Ovary (tissue), 10 donors: ENCODE measurements at regions of chr11 and their contacts with region 1.

Region 1: GRCh38 chr11:62645956-62646824 is at the start of gene GANAB:
- DNase-seq: peak; percentile 98 to 99 (median 99)
- H3K4me3 ChIP-seq: peak within 1 kb of the TSS; percentile 85
- H3K27ac ChIP-seq: peak within 1 kb of the TSS; percentile 69 to 87
- H3K4me1 ChIP-seq: peaks cover 4% of the 10 kb centered on the region
- H3K27me3 ChIP-seq: no peaks in the 10 kb centered on the region
- CTCF ChIP-seq: no peak
- EP300 ChIP-seq: no peak
- POLR2A ChIP-seq: peak; percentile 81
- total RNA-seq, gene GANAB: 91.4 to 278 (median 228) TPM

Region 2: DNA sequence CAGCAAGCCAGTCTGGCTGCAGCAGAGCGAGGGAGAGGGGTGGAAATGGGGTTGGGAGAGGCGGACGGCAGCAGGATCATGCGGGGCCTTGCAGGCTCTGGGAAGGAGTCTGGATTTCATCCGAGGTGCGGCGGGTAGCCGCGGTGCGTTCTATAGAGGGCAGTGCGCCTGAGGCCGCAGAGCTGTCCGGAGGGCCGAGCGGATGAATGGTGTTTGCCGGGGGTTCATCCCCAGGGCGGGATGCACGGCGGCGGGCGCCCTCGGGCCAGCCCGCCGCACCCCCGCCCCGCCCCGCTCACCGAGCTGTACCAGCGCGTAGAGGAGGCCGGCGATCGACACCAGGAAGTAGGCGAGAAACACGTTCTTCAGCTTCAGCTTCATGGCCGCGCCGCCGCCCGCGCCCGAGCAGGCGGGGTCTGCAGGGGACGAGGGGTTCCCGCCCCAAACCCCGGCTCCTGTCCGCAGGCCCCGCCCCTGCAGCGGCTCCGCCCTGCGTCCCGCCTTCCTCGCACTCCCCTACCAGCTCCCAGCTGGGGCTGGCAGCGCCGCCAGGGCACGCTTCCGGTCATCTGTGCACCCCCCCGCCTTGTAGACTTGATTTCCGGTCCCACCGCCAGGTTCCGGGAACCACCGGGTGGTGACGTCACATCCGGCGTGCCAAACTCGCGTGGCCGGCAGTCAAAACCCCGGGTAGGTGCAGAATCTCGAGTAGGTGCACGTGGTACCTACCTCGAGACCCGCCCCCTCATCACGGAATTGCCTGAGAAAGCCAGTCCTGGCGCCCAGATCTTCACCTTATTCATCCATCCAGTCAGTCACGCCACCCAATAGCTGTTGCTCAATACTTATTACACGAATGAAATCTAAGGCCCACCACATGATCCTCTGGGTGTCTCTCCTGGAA is 24.4 kb before region 1 on chr11 and contains the start of gene B3GAT3:
- intact Hi-C with region 1: loop called in 1 of 4 experiments (anchors 2 kb)
- DNase-seq: peak; percentile 98 to 99 (median 99)
- H3K4me3 ChIP-seq: peak within 1 kb of the TSS; percentile 76
- H3K27ac ChIP-seq: peak within 1 kb of the TSS; percentile 11 to 69
- H3K4me1 ChIP-seq: peaks cover 1% of the 10 kb centered on the region
- H3K27me3 ChIP-seq: no peaks in the 10 kb centered on the region
- CTCF ChIP-seq: peak in 1 of 3 donors; percentile 56
- EP300 ChIP-seq: peak; percentile 98
- POLR2A ChIP-seq: peak; percentile 62
- total RNA-seq, gene B3GAT3: 16.6 to 56.6 (median 33.9) TPM